Spleen (tissue), 13 donors: ENCODE measurements at regions of chr19 and their contacts with region 1.

Region 1: GRCh38 chr19:4567584-4568071 is 8.1 kb upstream of the SEMA6B start:
- DNase-seq: peak; percentile 88
- H3K4me3 ChIP-seq: no peak overlapping the region
- H3K27ac ChIP-seq: peak overlapping the region in 4 of 8 donors; percentile 15 to 55 (median 34)
- H3K4me1 ChIP-seq: peaks cover 0 to 68% (median 23%) of the 10 kb centered on the region in 6 donors
- H3K27me3 ChIP-seq: peaks cover 0 to 10% (median 0%) of the 10 kb centered on the region in 7 donors
- CTCF ChIP-seq: peak; percentile 70 to 94 (median 83)
- POLR2A ChIP-seq: no peak

Region 2: DNA sequence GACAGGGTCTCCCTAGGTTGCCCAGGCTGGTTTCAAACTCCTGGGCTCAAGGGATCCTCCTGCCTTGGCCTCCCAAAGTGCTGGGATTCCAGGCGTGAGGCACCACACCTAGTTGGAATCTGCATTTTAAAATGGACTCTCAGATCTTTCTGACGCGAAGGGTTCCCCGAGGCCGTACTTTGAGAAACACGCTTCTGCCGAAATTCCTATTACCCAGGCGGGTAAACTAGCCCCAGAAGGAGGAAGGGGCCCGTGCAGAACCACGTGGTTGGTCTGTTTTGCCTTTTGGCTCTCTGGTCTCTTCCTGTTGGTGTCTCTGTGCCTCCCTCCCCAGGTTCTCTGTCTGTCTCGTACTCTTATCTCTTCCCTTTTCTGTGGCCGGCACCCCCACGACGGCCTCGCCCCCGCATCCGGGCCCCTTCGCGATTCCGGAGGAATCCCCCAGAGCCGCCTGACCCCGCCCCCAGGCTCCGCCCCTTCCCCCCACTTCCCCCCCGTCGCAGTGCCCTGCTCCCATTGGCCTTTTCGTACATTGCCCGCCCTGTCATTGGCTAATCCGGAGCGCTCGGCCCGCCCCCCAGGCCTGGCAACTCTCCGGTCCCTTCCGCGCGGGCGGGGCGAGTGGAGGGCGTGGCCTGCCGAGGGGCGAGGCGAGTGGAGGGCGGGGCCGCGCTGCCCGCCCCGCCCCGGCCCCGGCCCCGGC is 71.4 kb after region 1 on chr19 and contains the start of gene TNFAIP8L1:
- intact Hi-C with region 1: loop called (anchors 5 kb)
- DNase-seq: peak; percentile 99
- H3K4me3 ChIP-seq: peak within 1 kb of the TSS; percentile 82 to 97 (median 84)
- H3K27ac ChIP-seq: peak within 1 kb of the TSS; percentile 37 to 90 (median 85)
- H3K4me1 ChIP-seq: peaks cover 17 to 96% (median 68%) of the 10 kb centered on the region in 6 donors
- H3K27me3 ChIP-seq: peaks cover 0 to 9% (median 0%) of the 10 kb centered on the region in 7 donors
- CTCF ChIP-seq: peak in 1 of 11 experiments; percentile 26
- POLR2A ChIP-seq: no peak
- total RNA-seq, gene TNFAIP8L1: 21.6 to 39.8 (median 27.5) TPM